ENCODE measurements at regions of chr3 and their contacts with region 1.

Region 1: DNA sequence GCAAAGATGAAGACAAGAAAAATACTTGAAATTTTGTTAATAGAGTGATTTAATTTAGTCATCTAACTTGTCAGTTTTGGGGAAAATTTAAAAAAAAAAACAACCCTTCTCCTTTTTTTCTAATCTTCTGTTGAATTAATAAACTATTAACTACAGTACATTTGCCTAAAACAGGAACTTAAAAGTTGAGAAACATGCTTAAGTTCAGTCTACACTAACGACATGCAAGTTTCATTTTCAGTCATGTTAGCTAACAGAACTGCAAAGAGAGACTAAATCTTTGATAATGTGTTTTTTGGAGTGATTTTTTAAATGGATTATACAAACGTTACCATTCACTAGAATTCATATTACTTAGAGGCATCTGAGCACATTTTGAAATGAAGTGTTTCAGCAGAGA is 71.9 kb upstream of the MBNL1 start:
- DNase-seq: no peak
- ATAC-seq: no peak
- H3K4me3 ChIP-seq: peak overlapping the region; percentile 62
- H3K27ac ChIP-seq: peak overlapping the region; percentile 86
- H3K4me1 ChIP-seq: peaks cover 27% of the 10 kb centered on the region
- H3K27me3 ChIP-seq: no peaks in the 10 kb centered on the region
- CTCF ChIP-seq: no peak

Region 2: DNA sequence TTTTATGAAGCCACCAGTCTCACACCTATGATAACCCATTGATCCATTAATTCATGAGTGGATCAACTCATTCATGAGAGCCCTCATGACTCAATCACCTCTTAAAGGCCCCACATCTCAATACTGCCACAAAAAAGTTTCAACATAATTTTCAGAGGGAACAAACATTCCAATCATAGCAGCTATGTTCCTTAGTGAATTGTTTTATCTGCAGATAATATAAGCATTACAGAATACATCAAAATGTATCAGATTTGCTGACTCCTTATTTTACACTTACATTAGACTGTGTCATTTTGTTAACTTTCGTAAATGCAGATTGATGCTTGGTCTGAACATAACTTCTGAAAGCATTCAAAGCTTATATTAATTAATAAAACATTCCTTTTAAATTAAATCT is 83.4 kb before region 1 on chr3:
- intact Hi-C with region 1: no loop called
- DNase-seq: no peak
- ATAC-seq: no peak
- H3K4me3 ChIP-seq: no peak overlapping the region
- H3K27ac ChIP-seq: no peak overlapping the region
- H3K4me1 ChIP-seq: no peaks in the 10 kb centered on the region
- H3K27me3 ChIP-seq: no peaks in the 10 kb centered on the region
- CTCF ChIP-seq: no peak

Region 3: DNA sequence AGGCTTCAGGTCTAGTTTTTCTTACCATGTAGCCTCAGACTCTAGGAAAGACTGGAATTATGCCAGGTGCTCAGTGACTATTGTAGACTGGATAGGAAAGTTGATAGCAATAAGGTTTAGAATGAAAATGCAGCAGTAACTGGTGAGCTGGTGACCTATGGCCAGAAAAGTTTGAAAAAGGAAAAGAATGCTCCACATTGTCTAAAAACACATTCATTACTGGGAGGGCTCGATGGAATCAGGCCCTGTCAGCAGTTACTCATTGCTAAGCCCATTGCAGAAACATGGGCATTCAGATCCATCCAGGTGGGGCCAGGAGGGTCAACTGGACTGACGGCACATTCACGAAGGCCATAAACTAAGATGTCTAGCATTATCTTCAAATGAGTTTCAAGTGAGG is 63.2 kb after region 1 on chr3:
- intact Hi-C with region 1: loop called in 1 of 2 experiments (anchors 5 kb)
- DNase-seq: no peak
- ATAC-seq: no peak
- H3K4me3 ChIP-seq: no peak overlapping the region
- H3K27ac ChIP-seq: peak overlapping the region; percentile 80
- H3K4me1 ChIP-seq: peaks cover 23% of the 10 kb centered on the region
- H3K27me3 ChIP-seq: no peaks in the 10 kb centered on the region
- CTCF ChIP-seq: no peak

Measured in psoas muscle (tissue), 8 donors.